SK-N-SH (cell line): ENCODE measurements at regions of chr10 and their contacts with region 1.

Region 1: GRCh38 chr10:129971381-129972144 is 7.5 kb upstream of the EBF3 start:
- DNase-seq: peak; percentile 96
- H3K4me3 ChIP-seq: peak overlapping the region; percentile 29 to 31; a peak in 2 of 4 replicates
- H3K27ac ChIP-seq: no peak overlapping the region
- H3K4me1 ChIP-seq: no peaks in the 10 kb centered on the region; a peak in 1 of 4 replicates
- H3K27me3 ChIP-seq: peaks cover 43% of the 10 kb centered on the region
- CTCF ChIP-seq: peak; percentile 35
- EP300 ChIP-seq: no peak
- RAD21 ChIP-seq: peak; percentile 67

Region 2: DNA sequence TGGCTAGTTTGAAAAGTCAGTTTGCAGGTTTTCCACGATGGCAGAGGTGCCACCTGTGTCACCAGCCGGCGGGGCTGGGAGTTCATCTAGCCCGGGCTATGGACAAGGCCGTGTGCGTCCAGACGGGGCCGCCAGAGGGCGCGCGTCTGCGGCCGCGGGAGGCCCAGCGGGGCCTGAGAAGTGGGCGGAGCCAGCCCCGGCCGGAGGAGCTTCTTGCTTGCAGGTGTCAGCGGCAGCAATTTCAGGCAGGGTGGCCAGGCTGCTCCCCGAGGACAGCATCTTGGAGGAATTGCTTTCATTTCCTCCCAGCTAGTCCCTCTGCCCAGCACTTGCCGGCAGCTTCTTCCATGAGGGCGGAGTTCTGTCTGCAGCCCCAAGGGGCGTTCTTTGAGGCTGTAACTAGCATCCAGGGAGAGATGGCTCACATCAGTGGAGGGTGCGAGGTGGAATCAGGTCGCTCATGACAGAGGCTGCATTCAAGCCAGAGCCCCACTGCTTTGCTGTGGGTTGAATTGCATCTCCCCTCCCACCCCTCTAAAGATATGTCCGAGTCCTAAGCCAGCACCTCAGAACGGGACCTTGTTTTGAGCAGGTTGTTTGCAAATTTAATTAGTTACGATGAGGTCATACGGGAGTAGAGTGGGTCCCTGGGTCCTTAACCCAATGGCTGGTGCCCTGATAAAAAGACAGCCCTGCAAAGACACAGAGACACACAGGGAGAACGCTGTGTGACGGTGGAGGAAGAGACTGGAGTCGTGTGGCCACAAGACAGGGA is 1759.4 kb before region 1 on chr10:
- CTCF ChIA-PET with region 1: interaction called, 10 read pairs
- POLR2A ChIA-PET with region 1: no interaction called
- DNase-seq: peak; percentile 97
- H3K4me3 ChIP-seq: peak overlapping the region; percentile 42 to 57; a peak in 3 of 4 replicates
- H3K27ac ChIP-seq: no peak overlapping the region
- H3K4me1 ChIP-seq: peaks cover 0 to 9% of the 10 kb centered on the region in 2 experiments; a peak in 1 of 4 replicates
- H3K27me3 ChIP-seq: no peaks in the 10 kb centered on the region
- CTCF ChIP-seq: peak; percentile 78
- EP300 ChIP-seq: no peak
- RAD21 ChIP-seq: peak; percentile 61

Region 3: DNA sequence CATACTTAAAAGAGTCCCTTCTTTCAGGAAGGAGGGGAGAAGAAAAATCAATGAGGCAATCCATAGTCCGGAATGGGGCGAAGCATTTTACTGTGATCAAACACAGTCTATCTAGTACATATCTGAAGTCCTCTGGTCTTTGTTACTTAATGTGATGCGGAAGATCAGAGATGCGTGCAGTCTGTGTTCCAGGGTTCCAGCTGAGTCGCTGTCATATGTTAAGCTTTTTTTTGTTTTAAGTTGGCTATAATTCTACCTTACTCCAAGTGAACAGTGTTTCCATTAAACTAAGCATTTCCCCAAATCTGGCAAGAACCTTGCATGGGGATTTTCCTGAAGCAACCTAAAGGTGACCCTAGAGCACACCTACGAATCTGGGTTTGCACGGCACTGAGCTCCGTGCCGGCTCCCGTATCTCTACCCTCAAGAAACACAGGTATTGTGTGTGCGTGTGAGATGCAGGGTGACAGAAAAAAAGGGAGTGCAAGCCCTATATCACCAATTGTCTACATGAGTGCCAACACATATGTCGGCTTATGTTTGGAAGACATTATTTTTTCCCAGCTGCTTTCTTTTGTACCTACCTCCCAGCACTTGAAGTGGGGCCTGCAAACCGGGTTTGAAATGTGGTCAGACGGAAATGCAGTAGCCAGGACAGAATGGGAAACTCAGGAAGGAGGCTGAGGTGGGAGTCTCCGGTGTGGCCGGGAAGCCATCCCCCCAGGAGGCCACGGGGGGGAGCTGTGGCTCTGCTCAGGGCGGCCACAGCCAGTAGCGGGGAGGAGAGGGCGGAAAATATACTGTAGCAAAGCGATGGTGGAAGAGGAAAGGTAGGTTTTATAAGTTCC is 940.3 kb before region 1 on chr10:
- CTCF ChIA-PET with region 1: interaction called, 66 read pairs
- POLR2A ChIA-PET with region 1: no interaction called
- DNase-seq: peak; percentile 90
- H3K4me3 ChIP-seq: peak overlapping the region in 1 of 2 experiments; percentile 46; a peak in 1 of 4 replicates
- H3K27ac ChIP-seq: no peak overlapping the region
- H3K4me1 ChIP-seq: no peaks in the 10 kb centered on the region; a peak in 1 of 4 replicates
- H3K27me3 ChIP-seq: no peaks in the 10 kb centered on the region
- CTCF ChIP-seq: peak; percentile 34
- EP300 ChIP-seq: no peak
- RAD21 ChIP-seq: peak; percentile 91

Region 4: DNA sequence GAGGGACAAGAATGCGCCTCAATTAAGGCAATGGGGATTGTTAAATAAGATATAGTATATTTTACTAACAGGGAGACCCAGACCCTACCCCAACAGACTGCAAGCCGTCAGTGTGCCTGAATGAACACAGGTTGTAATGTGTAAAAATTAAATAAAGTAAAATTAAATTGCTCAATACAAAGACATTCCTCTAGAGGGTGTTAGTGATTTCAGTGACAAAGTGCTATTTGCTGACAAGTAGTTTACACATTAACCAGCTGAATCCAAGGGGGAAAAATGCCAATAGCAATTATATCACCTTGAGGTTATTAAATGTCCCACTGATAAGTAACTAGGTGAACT is 118.0 kb before region 1 on chr10:
- CTCF ChIA-PET with region 1: interaction called, 14 read pairs
- POLR2A ChIA-PET with region 1: no interaction called
- DNase-seq: peak; percentile 48
- H3K4me3 ChIP-seq: no peak overlapping the region
- H3K27ac ChIP-seq: no peak overlapping the region
- H3K4me1 ChIP-seq: no peaks in the 10 kb centered on the region; a peak in 2 of 4 replicates
- H3K27me3 ChIP-seq: no peaks in the 10 kb centered on the region
- CTCF ChIP-seq: no peak
- EP300 ChIP-seq: no peak
- RAD21 ChIP-seq: peak; percentile 42; the same call in 1 of the 2 replicates

Region 5: DNA sequence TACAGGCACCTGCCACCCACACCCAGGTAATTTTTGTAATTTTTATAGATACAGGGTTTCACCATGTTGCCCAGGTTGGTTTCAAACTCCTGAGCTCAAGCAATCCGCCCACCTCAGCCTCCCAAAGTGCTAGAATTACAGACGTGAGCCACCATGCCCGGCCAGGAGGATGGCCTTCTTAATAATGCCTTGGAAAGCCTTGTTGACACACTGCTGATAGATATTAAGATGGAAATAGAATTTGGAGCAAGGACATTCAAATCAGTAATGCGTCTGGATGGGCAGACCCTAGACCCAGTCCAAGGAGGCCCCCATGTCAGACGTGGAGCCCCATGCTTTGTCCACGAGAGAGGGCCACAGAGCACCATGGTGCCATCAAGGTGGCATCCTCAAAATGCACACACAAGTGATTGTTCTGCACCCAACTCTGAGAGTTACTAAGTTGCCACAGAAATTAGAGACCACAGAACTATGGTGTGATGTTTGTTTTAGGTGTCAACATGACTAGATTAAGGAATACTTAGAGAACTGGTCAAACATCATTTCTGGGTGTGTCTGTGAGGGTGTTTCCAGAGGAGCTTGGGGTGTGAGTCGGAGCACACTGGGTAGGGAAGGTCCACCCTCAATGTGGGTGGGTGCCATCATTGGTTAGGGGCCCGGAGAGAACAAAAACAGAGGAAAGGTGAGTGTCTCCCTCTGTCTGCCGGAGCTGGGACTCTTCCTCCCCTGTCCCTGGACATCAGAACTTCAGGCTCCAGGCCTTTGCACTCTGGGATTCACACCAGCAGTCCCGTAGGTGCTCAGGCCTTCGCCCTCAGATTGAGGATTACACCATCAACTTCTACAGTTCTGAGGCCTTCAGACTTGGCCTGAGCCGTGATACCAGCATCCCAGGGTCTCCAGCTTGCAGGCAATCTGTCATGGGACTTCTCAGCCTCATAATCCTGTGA is 41.9 kb before region 1 on chr10:
- CTCF ChIA-PET with region 1: no interaction called
- POLR2A ChIA-PET with region 1: no interaction called
- DNase-seq: no peak
- H3K4me3 ChIP-seq: no peak overlapping the region
- H3K27ac ChIP-seq: no peak overlapping the region
- H3K4me1 ChIP-seq: no peaks in the 10 kb centered on the region
- H3K27me3 ChIP-seq: no peaks in the 10 kb centered on the region
- CTCF ChIP-seq: no peak
- EP300 ChIP-seq: no peak
- RAD21 ChIP-seq: no peak

Region 6: GRCh38 chr10:129949891-129950291 is 21.7 kb before region 1 on chr10:
- CTCF ChIA-PET with region 1: interaction called, 55 read pairs
- POLR2A ChIA-PET with region 1: no interaction called
- DNase-seq: peak; percentile 78
- H3K4me3 ChIP-seq: no peak overlapping the region
- H3K27ac ChIP-seq: no peak overlapping the region
- H3K4me1 ChIP-seq: peaks cover 0 to 26% of the 10 kb centered on the region in 2 experiments; a peak in 3 of 4 replicates
- H3K27me3 ChIP-seq: no peaks in the 10 kb centered on the region
- CTCF ChIP-seq: no peak
- EP300 ChIP-seq: no peak
- RAD21 ChIP-seq: no peak

Region 7: DNA sequence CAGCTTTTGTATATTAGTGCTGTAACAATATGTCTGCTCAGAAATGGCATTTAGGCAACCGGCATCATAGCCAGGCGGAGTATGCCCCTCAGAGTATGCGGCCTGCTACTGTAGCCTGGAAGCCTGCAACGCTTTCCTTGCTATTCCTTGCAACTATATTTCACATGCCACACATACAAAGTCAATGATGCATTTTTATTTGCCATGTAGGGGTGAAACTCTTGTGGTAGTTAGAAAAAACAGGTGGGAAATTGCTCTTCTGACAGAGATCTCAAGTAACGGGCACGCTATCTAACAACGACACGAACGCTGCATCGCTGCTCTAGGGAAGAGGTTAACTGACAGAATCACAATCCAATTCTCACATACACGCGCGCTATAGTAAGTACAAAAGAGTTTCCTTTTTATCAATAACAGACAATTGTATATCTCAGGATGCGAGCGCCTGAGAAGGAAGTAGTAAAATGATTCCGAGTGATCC is 13.4 kb before region 1 on chr10:
- CTCF ChIA-PET with region 1: interaction called, 55 read pairs
- POLR2A ChIA-PET with region 1: no interaction called
- DNase-seq: no peak
- H3K4me3 ChIP-seq: no peak overlapping the region
- H3K27ac ChIP-seq: no peak overlapping the region
- H3K4me1 ChIP-seq: peaks cover 0 to 9% of the 10 kb centered on the region in 2 experiments; a peak in 1 of 4 replicates
- H3K27me3 ChIP-seq: peaks cover 58% of the 10 kb centered on the region
- CTCF ChIP-seq: no peak
- EP300 ChIP-seq: no peak
- RAD21 ChIP-seq: peak; percentile 64

Region 8: DNA sequence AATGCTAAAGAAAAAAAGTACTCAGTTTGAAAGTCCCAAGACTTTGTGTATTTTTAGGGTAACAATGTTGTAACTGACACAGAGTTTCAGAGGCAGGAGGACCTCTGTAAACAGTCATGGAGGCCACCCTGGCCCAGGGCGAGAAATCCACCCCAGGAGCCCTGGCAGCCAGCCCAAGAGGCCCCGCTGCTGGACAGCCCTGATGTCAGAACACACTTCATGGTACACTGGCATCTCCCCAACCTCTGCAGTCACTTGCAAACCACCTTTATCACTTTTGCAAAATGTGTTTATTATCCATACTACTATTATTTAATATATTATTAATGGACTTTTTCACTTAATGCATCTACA is 108.9 kb after region 1 on chr10:
- CTCF ChIA-PET with region 1: no interaction called
- POLR2A ChIA-PET with region 1: no interaction called
- DNase-seq: no peak
- H3K4me3 ChIP-seq: no peak overlapping the region
- H3K27ac ChIP-seq: no peak overlapping the region
- H3K4me1 ChIP-seq: no peaks in the 10 kb centered on the region; a peak in 1 of 4 replicates
- H3K27me3 ChIP-seq: no peaks in the 10 kb centered on the region
- CTCF ChIP-seq: no peak
- EP300 ChIP-seq: no peak
- RAD21 ChIP-seq: no peak